Activated T-helper 2 cell treated with anti-CD3 and anti-CD28 coated beads, Interferon-gamma antibody, Interleukin-2, Interleukin-4, amounts not matched to agents 10 μg/mL and 5 μg/mL and 100 μg/mL, durations not matched to agents 14 hours and 24 hours and 36 hours (primary cell): ENCODE measurements at regions of chr15 and their contacts with region 1.

Region 1: GRCh38 chr15:82916161-82916952 is 36.2 kb downstream of the HOMER2 start:
- DNase-seq: no peak
- H3K4me3 Mint-ChIP-seq: no peak overlapping the region
- H3K27ac Mint-ChIP-seq: no peak overlapping the region
- H3K4me1 Mint-ChIP-seq: no peaks in the 10 kb centered on the region
- H3K27me3 Mint-ChIP-seq: no peaks in the 10 kb centered on the region

Region 2: DNA sequence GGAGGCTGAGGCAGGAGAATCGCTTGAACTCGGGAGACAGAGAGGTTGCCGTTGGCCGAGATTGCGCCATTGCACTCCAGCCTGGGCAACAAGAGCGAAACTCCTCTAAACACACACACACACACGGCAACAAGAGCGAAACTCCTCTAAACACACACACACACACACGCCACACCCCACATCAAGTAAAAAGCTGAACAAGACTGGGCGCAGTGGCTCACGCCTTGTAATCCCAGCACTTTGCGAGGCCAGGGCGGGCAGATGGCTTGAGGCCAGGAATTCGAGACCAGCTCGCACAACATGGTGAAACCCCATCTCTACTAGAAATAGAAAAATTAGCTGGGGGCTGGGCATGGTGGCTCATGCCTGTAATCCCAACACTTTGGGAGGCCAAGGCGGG is 12.8 kb before region 1 on chr15:
- intact Hi-C with region 1: loop called (anchors 2 kb)
- DNase-seq: no peak
- H3K4me3 Mint-ChIP-seq: no peak overlapping the region
- H3K27ac Mint-ChIP-seq: no peak overlapping the region
- H3K4me1 Mint-ChIP-seq: peaks cover 16% of the 10 kb centered on the region
- H3K27me3 Mint-ChIP-seq: peaks cover 4% of the 10 kb centered on the region

Region 3: DNA sequence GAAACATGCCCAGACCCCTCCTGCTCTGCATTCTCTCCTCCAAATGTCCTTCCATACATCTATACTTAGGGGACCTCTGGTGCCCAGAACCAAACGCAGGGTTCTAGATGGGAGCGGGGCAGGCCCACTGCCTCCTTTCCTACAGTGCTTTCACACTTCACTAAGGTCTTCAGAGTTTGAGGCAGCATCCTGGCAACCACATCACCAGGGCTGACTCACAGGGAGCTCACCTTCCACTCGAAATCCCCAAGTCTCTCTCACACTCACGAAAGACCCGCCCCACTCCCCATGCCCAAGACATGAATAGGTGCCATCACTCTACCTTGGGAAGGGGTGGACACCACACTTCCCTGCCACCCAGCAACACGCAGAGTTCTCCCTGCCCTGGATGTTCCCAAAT is 17.2 kb after region 1 on chr15:
- intact Hi-C with region 1: no loop called
- DNase-seq: no peak
- H3K4me3 Mint-ChIP-seq: no peak overlapping the region
- H3K27ac Mint-ChIP-seq: no peak overlapping the region
- H3K4me1 Mint-ChIP-seq: peaks cover 38% of the 10 kb centered on the region
- H3K27me3 Mint-ChIP-seq: peaks cover 2% of the 10 kb centered on the region

Region 4: DNA sequence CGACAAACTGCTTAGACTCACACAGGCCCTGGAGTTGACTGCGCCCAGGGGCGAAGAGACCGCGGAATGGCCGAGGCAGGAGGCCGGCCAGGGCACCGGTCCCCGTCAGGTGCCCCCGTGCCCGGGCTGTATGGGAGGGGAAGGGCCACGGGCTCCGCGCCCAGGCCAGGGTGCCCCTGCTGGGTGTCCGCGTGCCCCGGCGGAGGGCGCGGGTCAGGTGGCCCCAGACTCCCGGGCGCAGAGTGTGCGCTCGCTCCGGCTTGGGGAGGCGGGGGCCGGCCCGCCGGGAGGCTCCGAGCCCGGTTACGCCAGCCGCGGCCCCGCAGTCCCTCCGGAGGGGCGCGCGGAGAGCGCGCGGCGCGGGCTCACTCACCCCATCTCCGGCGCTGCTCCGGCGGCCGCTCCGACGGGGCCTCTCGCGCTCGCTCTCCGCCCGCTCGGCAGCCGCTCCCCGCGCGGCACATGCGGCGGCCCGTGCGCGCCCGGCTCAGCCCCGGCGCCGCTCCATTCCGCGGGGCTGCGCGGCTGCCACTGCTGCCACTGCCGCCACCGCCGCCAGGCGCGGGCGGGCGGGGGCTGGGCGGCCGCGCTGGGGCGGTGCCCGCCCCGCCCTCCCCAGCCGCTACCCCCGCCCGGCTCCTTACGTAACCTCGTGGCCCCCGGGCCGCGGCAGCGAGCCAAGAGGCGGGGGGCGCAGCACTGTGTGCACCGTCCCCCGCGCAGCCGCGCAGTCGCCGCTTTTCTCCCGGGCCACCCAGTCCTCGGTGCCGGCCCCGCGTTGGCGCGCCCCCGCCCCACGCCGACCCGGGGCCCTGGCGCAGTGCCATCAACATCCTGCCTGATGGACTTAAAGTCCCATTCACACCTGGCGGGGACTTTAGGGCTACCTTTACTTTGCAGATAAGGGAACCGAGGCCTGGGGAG is 36.1 kb after region 1 on chr15 and contains the start of gene HOMER2:
- intact Hi-C with region 1: no loop called
- DNase-seq: peak; percentile 16
- H3K4me3 Mint-ChIP-seq: peak within 1 kb of the TSS; percentile 63
- H3K27ac Mint-ChIP-seq: no peak within 1 kb of the TSS
- H3K4me1 Mint-ChIP-seq: peaks cover 6% of the 10 kb centered on the region
- H3K27me3 Mint-ChIP-seq: peaks cover 2% of the 10 kb centered on the region
- total RNA-seq, gene HOMER2: 66.1 and 73.3 TPM in 2 replicates

Region 5: DNA sequence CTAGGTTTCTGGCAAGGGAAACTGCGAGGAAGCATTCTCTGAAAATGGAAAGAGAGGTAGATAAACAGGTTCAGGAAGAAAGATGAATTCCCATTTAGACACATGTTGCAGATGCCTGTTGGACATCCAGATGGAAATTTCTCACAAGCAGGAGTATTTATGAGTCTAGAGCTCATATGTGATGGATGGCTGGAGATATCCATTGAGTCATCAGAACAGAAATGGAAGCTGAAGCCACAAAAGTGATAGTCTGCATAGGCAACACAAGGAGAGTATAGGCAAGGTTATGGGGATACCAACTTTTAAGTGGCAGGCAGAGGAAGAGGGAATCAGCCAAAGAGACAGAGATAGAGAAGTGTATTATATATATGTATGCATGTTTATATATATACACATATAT is 63.4 kb after region 1 on chr15:
- intact Hi-C with region 1: no loop called
- DNase-seq: no peak
- H3K4me3 Mint-ChIP-seq: no peak overlapping the region
- H3K27ac Mint-ChIP-seq: no peak overlapping the region
- H3K4me1 Mint-ChIP-seq: peaks cover 11% of the 10 kb centered on the region
- H3K27me3 Mint-ChIP-seq: peaks cover 6% of the 10 kb centered on the region